Right cardiac atrium (tissue), 5 donors: ENCODE measurements at regions of chr9 and their contacts with region 1.

Region 1: DNA sequence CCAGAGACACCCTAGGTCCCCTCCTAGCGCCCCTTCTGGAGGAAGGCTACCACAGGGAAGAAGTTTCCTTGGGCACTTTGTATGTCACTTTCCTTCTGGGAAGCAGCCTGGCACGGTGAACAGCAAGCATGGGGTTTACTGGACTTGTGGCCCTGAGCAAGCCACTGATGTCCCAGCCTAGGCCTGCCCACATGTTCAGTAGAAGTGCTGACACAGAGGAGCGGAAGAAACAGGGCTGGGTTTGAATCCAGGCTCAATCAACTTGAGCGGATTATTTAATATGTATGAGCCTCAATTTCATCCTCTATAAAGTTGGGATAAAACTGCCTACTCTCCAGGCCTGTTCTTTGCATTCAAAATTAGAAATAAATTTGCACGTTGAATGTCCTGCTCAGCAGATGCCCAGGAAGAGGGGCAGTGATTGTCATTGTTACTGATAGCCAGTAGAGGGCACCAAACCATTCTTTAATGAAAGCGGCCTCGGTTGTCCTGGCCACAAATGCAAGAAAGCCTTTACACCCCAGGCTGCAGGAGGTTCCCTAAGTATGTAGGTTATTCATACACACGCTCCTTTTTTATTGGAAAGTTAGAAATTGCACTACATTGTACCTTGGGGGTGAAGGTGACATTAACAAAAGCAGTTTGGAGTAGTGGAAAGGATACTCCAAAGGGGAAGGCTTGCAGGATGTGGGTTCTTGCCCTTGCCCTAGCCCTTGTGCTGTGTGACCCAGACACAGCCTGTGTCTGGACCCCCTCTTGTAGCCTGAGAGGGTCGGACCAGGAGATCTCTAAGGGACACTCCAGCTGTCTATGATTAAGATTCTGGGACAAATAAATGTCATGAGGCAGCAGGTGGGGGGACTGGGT is 13.4 kb upstream of the XPA start:
- DNase-seq: peak in 2 of 3 donors; percentile 37 to 64
- ATAC-seq: peak; percentile 81 to 87
- H3K4me3 ChIP-seq: no peak overlapping the region
- H3K27ac ChIP-seq: no peak overlapping the region
- H3K4me1 ChIP-seq: no peaks in the 10 kb centered on the region
- H3K27me3 ChIP-seq: no peaks in the 10 kb centered on the region

Region 2: DNA sequence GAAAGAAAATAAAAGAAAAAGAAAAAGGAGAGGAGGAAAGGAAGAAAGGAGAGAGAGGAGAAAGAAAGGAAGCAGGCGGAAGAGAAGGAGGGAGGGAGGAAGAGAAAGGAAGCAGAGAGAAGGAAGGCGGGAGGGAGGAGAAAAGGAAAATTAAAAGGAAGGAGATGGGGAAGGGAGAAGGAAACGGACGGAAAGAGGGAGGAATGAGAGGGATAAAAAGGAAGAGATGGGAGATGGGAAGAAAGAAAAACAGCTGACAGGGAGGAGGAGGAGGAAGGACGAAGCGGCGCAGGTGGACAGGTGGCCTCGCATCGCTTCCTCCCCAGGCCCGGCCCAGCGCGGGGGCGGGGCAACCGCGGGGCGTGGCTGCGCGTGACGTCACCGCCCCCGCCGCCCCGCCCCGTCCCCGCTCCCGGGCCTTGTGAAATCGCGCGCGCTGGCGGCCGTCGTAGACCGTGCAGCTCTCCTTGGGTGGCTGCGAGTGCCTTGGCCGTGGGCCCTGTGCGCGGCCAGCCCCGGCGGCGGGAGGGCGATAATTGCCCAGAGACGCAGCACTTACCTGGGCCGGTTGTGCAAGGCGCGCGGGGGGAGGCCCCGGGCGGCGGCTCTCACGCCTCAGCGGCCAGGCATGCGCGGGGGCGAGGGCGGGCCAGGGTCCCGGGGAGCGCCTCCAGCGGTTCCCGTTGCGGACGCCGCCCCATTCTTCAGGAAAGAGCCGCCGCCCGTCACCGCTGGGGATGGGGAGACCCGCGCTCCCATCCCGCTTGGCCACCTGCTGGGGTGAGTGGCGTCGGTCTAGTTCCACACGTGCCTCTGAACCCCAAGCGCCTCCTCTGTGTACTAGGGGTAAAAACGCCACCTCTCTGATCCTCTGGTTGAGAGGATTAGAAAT is 92.8 kb after region 1 on chr9:
- intact Hi-C with region 1: loop called in 1 of 4 experiments (anchors 10 kb)
- DNase-seq: peak; percentile 82 to 92 (median 92)
- ATAC-seq: peak; percentile 97 to 98
- H3K4me3 ChIP-seq: peak overlapping the region; percentile 30
- H3K27ac ChIP-seq: no peak overlapping the region
- H3K4me1 ChIP-seq: no peaks in the 10 kb centered on the region
- H3K27me3 ChIP-seq: no peaks in the 10 kb centered on the region

Region 3: DNA sequence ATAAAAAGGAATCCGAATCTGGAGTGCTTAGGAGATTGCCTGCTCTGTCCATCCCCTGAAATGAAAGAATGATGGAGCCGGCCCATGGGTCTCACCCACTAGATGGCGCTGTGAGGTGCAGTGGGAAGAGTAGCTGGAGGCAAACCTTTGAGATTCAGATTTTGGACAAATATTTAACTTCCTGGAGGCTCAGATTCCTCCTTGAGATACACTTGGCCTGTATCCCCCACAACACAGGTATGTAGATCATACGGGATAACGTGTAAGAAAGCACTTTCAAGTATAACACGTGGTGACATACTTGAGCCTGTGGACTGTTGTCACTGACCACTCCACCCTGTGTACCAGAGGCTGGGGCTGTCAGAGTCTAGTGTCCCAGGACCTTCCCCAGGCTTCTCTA is 179.4 kb after region 1 on chr9:
- intact Hi-C with region 1: loop called in 1 of 4 experiments (anchors 10 kb)
- DNase-seq: no peak
- ATAC-seq: no peak
- H3K4me3 ChIP-seq: no peak overlapping the region
- H3K27ac ChIP-seq: no peak overlapping the region
- H3K4me1 ChIP-seq: no peaks in the 10 kb centered on the region
- H3K27me3 ChIP-seq: no peaks in the 10 kb centered on the region

Region 4: GRCh38 chr9:97900738-97901565 is 190.4 kb after region 1 on chr9:
- intact Hi-C with region 1: loop called (anchors 2 to 10 kb)
- DNase-seq: peak in 1 of 3 donors; percentile 62
- ATAC-seq: peak in 1 of 2 donors; percentile 49
- H3K4me3 ChIP-seq: no peak overlapping the region
- H3K27ac ChIP-seq: no peak overlapping the region
- H3K4me1 ChIP-seq: no peaks in the 10 kb centered on the region
- H3K27me3 ChIP-seq: no peaks in the 10 kb centered on the region